HepG2 (cell line): ENCODE measurements at regions of chr12 and their contacts with region 1.

Region 1: DNA sequence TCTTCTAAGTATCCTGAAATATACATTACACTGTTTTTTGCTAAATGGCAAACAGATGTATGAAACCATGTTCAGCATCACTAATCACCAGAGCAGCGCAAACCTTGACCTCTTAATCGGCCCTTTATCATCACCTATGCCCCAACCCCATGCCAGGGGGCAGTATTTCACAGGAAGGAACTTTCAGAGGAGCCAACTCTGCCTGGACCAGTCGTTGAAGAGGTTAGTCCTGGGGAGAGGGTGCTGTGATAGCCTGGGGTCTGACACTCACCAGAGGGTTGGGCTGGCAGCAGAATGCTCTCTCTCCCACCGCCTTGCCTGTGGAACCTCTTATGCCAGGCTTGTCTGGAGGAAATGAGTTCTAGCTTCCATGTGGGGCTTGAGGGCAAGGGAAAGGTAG is 411.7 kb downstream of the TMEM117 start:
- DNase-seq: no peak
- ATAC-seq: no peak
- H3K4me3 ChIP-seq: no peak overlapping the region
- H3K27ac ChIP-seq: no peak overlapping the region
- H3K4me1 ChIP-seq: no peaks in the 10 kb centered on the region
- H3K27me3 ChIP-seq: no peaks in the 10 kb centered on the region
- CTCF ChIP-seq: peak; percentile 36
- EP300 ChIP-seq: no peak
- POLR2A ChIP-seq: no peak
- RAD21 ChIP-seq: no peak

Region 2: DNA sequence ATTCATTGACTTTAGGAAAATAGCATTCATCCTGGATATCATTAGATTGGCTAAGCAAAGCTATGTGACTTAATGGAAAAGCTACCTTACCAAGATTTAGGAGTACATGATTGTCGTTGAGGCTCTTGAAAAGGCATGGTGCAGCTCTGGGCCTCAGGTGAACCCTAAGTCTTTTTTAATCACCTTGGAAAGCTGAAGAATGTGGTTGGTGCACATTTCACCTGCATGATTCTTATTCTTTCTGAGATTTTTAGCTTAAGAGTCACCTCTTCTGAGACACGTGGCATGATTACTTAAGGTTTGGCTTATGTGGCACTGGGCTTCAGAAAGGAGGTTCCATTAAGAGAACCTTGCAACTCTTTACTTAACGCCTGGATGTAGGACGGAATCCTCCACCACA is 86.7 kb after region 1 on chr12:
- CTCF ChIA-PET with region 1: no interaction called
- POLR2A ChIA-PET with region 1: no interaction called
- in situ Hi-C with region 1: no loop called
- intact Hi-C with region 1: no loop called
- DNase-seq: no peak
- ATAC-seq: no peak
- H3K4me3 ChIP-seq: no peak overlapping the region
- H3K27ac ChIP-seq: no peak overlapping the region
- H3K4me1 ChIP-seq: no peaks in the 10 kb centered on the region
- H3K27me3 ChIP-seq: no peaks in the 10 kb centered on the region
- CTCF ChIP-seq: no peak
- EP300 ChIP-seq: no peak
- POLR2A ChIP-seq: no peak
- RAD21 ChIP-seq: no peak

Region 3: DNA sequence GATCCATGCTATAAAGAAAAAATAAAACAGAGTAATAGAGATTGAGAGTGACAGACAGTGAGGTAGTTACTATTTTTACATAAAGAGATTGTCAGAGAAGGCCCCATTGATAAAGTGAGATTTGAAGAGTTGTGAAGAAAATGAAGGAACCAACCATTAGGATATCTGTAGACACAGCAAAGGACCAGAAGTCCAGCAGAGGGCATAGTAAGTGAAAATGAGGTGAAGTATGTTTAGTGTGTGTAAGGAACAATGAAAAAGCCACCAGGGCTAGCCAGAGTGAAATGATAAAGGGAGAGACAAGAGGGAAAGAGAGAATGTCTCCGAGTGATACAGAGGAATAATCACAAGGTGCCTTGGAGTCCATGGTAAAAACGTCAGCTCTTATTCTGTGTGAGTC is 217.6 kb after region 1 on chr12:
- CTCF ChIA-PET with region 1: no interaction called
- POLR2A ChIA-PET with region 1: no interaction called
- in situ Hi-C with region 1: no loop called
- intact Hi-C with region 1: loop called (anchors 10 kb)
- DNase-seq: no peak
- ATAC-seq: peak; percentile 78
- H3K4me3 ChIP-seq: no peak overlapping the region
- H3K27ac ChIP-seq: no peak overlapping the region
- H3K4me1 ChIP-seq: no peaks in the 10 kb centered on the region
- H3K27me3 ChIP-seq: no peaks in the 10 kb centered on the region; a peak in 2 of 5 replicates
- CTCF ChIP-seq: 0 out of 2 replicates have a peak, but pooled peaks have one; percentile 16
- EP300 ChIP-seq: no peak
- POLR2A ChIP-seq: no peak
- RAD21 ChIP-seq: no peak